PC-3 (cell line): ENCODE measurements at regions of chr17 and their contacts with region 1.

Region 1: GRCh38 chr17:29918922-29919856 is 10.8 kb downstream of the SSH2 start:
- DNase-seq: peak; percentile 35
- ATAC-seq: peak; percentile 64
- H3K4me3 ChIP-seq: no peak overlapping the region
- H3K27ac ChIP-seq: no peak overlapping the region
- H3K4me1 ChIP-seq: peaks cover 10% of the 10 kb centered on the region
- H3K27me3 ChIP-seq: no peaks in the 10 kb centered on the region
- CTCF ChIP-seq: no peak

Region 2: DNA sequence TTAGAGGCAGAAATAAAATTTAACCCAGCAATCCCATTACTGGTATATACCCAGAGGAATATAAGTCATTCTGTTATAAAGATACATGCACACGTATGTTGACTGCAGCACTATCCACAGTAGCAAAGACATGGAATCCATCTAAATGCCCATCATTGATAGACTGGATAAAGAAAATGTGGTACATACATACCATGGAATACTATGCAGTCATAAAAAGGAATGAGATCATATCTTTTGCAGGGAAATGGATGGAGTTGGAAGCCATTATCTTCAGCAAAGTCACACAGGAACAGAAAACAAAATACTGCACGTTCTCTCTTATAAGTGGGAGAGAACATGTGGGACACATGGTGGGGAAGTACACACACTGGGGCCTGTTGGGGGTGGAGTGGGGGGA is 12.2 kb before region 1 on chr17:
- CTCF ChIA-PET with region 1: no interaction called
- POLR2A ChIA-PET with region 1: interaction called, 38 read pairs
- intact Hi-C with region 1: no loop called
- DNase-seq: no peak
- ATAC-seq: no peak
- H3K4me3 ChIP-seq: no peak overlapping the region
- H3K27ac ChIP-seq: no peak overlapping the region
- H3K4me1 ChIP-seq: peaks cover 14% of the 10 kb centered on the region; the same call in 1 of the 2 replicates
- H3K27me3 ChIP-seq: no peaks in the 10 kb centered on the region
- CTCF ChIP-seq: no peak

Region 3: DNA sequence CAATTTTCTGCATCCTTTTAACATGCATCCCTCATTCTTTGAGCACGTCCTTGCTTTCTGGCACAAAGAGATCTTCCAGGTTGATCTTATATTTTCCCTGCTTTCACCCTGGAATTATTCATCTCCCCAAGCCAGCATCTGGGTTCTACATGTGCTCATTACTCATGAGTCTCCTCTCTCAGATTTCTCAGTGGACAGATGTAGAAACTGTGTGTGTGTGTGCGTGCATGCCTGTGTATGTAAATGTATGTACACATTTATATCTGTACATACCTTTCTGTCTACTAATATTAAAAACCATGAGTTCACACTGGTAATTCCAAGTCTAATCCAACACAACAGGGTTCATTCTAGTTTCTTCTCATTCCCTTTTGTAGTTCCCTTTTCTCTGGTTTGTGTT is 155.5 kb after region 1 on chr17:
- CTCF ChIA-PET with region 1: no interaction called
- POLR2A ChIA-PET with region 1: no interaction called
- intact Hi-C with region 1: no loop called
- DNase-seq: no peak
- ATAC-seq: no peak
- H3K4me3 ChIP-seq: no peak overlapping the region
- H3K27ac ChIP-seq: no peak overlapping the region
- H3K4me1 ChIP-seq: no peaks in the 10 kb centered on the region
- H3K27me3 ChIP-seq: peaks cover 48% of the 10 kb centered on the region
- CTCF ChIP-seq: no peak